Psoas muscle (tissue), 8 donors: ENCODE measurements at regions of chr14 and their contacts with region 1.

Region 1: DNA sequence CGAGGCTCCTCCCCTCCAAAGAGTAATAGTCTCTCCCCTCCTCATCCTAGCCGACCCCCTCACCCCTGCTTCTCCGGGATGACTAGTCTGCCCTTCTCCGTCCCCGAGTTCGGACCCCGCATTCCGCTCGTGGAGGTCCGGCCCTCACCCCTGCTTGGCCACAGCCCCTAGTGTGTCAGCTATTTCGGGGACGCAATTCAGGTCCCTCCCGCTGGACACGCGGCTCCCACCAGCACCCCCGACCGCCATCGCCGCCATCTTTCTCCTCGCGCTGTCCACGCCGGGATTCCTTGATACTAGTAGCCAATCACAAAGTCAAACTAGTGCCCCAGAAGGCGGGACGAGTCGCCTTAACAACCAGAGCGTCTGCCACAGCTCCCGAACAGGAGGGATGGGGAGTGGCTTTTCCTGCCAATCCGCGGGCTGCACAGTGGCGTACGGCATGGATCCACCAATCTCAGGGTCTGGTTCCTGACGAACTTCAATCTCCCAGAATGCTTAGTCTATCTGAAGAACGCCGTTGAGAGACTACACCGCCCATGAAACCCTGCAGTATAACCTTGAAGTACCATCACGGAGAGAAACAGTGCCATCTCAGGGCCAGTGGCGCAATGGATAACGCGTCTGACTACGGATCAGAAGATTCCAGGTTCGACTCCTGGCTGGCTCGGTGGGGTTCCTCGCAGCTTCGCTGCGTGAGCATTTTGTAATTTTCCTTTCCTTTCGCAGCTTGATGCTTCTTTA is at the start of gene PRMT5:
- DNase-seq: peak; percentile 99 to 100
- ATAC-seq: peak; percentile 93 to 98 (median 96)
- H3K4me3 ChIP-seq: peak within 1 kb of the TSS; percentile 90
- H3K27ac ChIP-seq: peak within 1 kb of the TSS; percentile 90
- H3K4me1 ChIP-seq: peaks cover 16% of the 10 kb centered on the region
- H3K27me3 ChIP-seq: no peaks in the 10 kb centered on the region
- CTCF ChIP-seq: no peak
- total RNA-seq, gene PRMT5: 67.5 to 80.4 (median 74.1) TPM

Region 2: DNA sequence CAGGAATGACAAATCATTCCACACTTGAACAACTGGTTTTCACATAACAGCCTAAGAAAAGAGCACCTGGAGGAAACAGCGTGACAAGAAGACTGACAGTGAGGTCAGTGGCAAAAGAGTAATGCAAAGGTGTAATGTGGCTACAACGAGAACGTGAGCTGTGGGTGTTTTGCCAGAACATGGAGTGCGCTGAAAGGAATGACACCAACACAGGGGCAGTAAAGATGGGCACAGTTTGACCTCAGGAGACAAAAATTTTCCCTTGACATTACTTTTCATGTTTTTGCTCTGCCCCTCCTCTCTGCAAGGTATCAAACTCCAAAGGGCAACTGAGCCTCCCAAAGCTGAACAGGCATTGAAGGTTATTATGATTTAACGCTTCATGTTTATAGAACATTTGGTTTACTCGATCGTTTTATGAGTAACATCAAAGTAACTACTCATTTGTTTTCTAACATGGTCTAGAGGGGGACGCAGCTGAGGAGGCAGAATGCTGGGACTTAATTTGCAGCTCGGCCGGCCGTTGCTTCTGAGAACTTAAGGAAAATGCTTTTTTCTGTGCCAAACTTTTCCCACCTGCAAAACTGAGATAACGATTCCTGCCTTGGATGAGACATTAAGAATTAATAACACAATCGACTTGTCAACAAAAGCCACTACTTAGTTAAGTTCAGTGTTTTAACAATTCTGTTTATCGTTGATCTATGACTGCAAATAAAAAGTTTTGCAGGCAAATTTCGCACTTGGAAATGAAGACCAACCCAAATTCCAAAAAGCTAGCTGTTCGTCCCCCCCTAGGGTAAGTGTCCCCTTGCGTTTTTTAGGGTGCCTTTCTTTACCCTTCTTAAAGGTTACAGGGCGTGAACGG is 26.7 kb after region 1 on chr14:
- intact Hi-C with region 1: loop called in 1 of 2 experiments (anchors 2 kb)
- DNase-seq: no peak
- ATAC-seq: no peak
- H3K4me3 ChIP-seq: peak overlapping the region; percentile 82
- H3K27ac ChIP-seq: peak overlapping the region; percentile 94
- H3K4me1 ChIP-seq: peaks cover 6% of the 10 kb centered on the region
- H3K27me3 ChIP-seq: no peaks in the 10 kb centered on the region
- CTCF ChIP-seq: no peak

Region 3: DNA sequence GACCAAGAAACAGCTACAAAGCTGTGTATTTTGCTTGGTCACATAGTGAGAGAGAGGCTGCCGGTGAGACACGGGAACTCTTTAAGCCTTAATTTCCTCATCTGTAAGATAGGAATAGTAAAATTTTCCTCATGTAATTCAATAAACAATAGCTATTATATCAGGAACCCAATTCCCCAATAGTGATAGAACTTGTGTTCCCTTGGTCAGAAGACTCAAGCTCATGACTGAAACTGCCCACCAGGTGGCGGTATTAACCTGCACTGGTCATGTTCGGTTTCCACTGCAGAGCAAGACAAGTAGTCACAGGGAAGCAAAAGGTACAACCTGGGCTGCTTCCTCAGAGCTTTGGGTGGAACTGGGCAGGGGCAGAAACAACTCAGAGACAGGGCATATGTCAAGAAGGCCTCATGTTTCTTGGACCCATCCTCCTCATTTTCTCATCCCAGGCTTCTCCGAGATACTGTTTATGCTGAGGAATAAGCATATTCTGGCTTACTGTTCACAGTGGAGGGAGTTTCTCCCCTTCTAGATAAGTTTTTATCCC is 57.3 kb after region 1 on chr14:
- intact Hi-C with region 1: loop called in 1 of 2 experiments (anchors 10 kb)
- DNase-seq: peak; percentile 85 to 89
- ATAC-seq: peak; percentile 75 to 81 (median 77)
- H3K4me3 ChIP-seq: no peak overlapping the region
- H3K27ac ChIP-seq: no peak overlapping the region
- H3K4me1 ChIP-seq: peaks cover 8% of the 10 kb centered on the region
- H3K27me3 ChIP-seq: peaks cover 0 to 14% (median 6%) of the 10 kb centered on the region in 3 donors
- CTCF ChIP-seq: peak; percentile 94